Activated naive CD4-positive, alpha-beta T cell treated with anti-CD3 and anti-CD28 coated beads for 36 hours (primary cell): ENCODE measurements at regions of chr2 and their contacts with region 1.

Region 1: DNA sequence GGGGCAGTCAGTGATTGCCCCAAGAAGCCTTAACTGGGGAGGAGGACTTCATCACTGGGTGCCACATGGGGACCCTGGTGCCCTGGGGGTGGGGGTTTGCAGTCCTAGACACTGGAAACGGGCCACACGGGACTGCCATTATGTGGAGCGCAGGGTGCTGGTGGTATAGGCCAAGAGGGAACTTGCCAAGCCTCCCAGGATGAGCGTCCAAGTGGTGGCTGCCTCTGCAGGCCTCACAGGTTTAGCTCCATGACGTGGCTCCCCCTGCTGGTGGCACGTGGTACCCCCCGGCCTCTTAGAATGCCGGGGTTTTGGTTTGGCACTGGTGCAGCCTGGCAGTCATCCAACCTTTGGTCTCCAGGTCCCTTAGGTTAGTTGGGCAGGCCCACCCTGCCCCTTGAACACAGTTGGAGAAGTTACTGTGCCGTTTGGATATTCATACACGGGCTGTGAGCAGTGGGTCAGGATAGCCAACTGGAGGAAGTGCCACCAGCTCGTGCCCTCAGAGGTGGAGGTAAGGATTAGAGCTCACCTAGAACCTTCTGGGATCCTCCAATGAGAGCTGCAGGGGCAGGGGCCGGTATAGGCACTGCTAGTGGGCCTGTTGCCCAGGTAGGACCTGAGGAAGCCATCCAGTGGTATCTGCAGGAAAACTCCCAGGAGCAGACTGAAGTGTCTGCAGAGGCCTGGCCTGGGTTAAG is 5.6 kb downstream of the PTMA start:
- DNase-seq: peak; percentile 95
- H3K4me3 Mint-ChIP-seq: peak overlapping the region; percentile 46
- H3K27ac Mint-ChIP-seq: peak overlapping the region; percentile 94
- H3K4me1 Mint-ChIP-seq: peaks cover 27% of the 10 kb centered on the region
- H3K27me3 Mint-ChIP-seq: no peaks in the 10 kb centered on the region

Region 2: GRCh38 chr2:231198291-231199173 is 515.3 kb before region 1 on chr2 and contains the start of gene ARMC9:
- CTCF ChIA-PET with region 1: no interaction called
- intact Hi-C with region 1: no loop called
- DNase-seq: peak; percentile 64
- H3K4me3 Mint-ChIP-seq: peak within 1 kb of the TSS; percentile 87
- H3K27ac Mint-ChIP-seq: no peak within 1 kb of the TSS
- H3K4me1 Mint-ChIP-seq: peaks cover 8% of the 10 kb centered on the region
- H3K27me3 Mint-ChIP-seq: no peaks in the 10 kb centered on the region
- total RNA-seq, gene ARMC9: 1.0 to 1.4 TPM

Region 3: GRCh38 chr2:231482806-231483391 is 231.0 kb before region 1 on chr2:
- CTCF ChIA-PET with region 1: interaction called, 16 read pairs
- intact Hi-C with region 1: no loop called
- DNase-seq: peak; percentile 78
- H3K4me3 Mint-ChIP-seq: peak overlapping the region; percentile 83
- H3K27ac Mint-ChIP-seq: peak overlapping the region; percentile 89
- H3K4me1 Mint-ChIP-seq: peaks cover 13% of the 10 kb centered on the region
- H3K27me3 Mint-ChIP-seq: no peaks in the 10 kb centered on the region

Region 4: GRCh38 chr2:231648587-231649174 is 65.2 kb before region 1 on chr2:
- CTCF ChIA-PET with region 1: interaction called, 16 read pairs
- intact Hi-C with region 1: loop called (anchors 1 kb)
- DNase-seq: peak; percentile 77
- H3K4me3 Mint-ChIP-seq: no peak overlapping the region
- H3K27ac Mint-ChIP-seq: no peak overlapping the region
- H3K4me1 Mint-ChIP-seq: peaks cover 4% of the 10 kb centered on the region
- H3K27me3 Mint-ChIP-seq: no peaks in the 10 kb centered on the region

Region 5: GRCh38 chr2:231696007-231696371 is 17.9 kb before region 1 on chr2:
- CTCF ChIA-PET with region 1: interaction called, 123 read pairs
- intact Hi-C with region 1: no loop called
- DNase-seq: no peak
- H3K4me3 Mint-ChIP-seq: no peak overlapping the region
- H3K27ac Mint-ChIP-seq: no peak overlapping the region
- H3K4me1 Mint-ChIP-seq: no peaks in the 10 kb centered on the region
- H3K27me3 Mint-ChIP-seq: no peaks in the 10 kb centered on the region

Region 6: DNA sequence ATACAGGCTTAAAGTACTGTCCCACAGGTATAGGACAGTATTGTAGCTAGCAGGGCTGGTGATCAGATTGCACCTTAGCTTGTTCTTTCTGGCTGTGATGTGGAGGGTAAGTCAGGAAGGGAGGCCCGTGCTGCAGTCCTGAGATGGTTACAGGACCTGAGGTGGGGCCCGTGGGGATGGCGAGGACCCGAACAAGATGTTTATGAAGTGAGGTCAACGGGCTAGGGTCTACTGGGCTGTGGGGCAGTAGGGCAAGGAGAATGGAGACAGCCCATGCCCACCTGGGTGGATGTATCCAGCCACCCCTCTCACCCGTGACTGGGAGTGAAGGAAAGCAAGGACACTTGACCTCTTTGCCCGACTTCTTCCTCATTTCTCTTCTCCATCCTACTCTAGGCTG is 12.3 kb after region 1 on chr2:
- CTCF ChIA-PET with region 1: interaction called, 38 read pairs
- intact Hi-C with region 1: no loop called
- DNase-seq: no peak
- H3K4me3 Mint-ChIP-seq: no peak overlapping the region
- H3K27ac Mint-ChIP-seq: no peak overlapping the region
- H3K4me1 Mint-ChIP-seq: no peaks in the 10 kb centered on the region
- H3K27me3 Mint-ChIP-seq: no peaks in the 10 kb centered on the region